Uterus (tissue), 4 donors: ENCODE measurements at regions of chr4 and their contacts with region 1.

Region 1: DNA sequence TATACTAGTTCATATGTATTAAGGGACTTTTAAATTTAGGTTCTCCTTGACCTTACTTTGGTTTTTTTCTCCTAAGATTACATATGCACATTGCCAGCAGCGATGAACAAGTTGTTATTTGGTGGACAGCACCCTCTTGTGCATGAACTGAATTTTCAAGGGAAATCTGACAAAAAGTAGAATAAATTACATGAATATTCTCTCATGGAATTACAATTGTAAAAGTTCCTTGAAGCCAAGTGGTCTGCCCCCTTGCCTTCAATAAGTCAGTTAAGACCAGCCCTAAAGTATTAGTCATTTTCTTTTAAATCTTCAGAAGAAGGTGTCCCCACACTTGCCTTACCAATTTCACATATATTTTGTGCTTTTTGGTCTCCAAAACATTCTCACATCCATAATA is 30.7 kb upstream of the SMARCA5 start:
- DNase-seq: peak in 1 of 2 donors; percentile 30
- H3K4me3 ChIP-seq: no peak overlapping the region
- H3K27ac ChIP-seq: no peak overlapping the region
- H3K4me1 ChIP-seq: no peaks in the 10 kb centered on the region
- H3K27me3 ChIP-seq: no peaks in the 10 kb centered on the region
- CTCF ChIP-seq: peak; percentile 72 to 78 (median 74)
- POLR2A ChIP-seq: no peak

Region 2: DNA sequence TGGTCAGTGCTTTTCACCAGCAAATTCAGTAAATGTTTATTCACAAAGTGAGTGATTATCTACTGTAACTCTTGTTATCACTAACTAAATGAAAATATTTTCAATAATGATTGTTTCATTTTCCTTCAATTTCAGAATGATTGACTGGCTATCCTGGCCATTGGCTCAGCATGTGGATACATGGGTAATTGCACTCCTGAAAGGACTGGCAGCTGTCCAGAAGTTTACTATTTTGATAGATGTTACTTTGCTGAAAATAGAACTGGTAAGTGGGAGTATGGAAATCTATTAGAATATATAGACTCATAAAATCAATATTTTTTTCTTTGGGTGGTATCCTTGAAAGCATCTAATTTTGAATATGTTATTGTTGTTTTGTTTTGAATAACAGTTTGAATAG is 287.3 kb before region 1 on chr4:
- intact Hi-C with region 1: loop called (anchors 10 kb)
- DNase-seq: no peak
- H3K4me3 ChIP-seq: no peak overlapping the region
- H3K27ac ChIP-seq: no peak overlapping the region
- H3K4me1 ChIP-seq: no peaks in the 10 kb centered on the region
- H3K27me3 ChIP-seq: no peaks in the 10 kb centered on the region
- CTCF ChIP-seq: no peak
- POLR2A ChIP-seq: no peak

Region 3: DNA sequence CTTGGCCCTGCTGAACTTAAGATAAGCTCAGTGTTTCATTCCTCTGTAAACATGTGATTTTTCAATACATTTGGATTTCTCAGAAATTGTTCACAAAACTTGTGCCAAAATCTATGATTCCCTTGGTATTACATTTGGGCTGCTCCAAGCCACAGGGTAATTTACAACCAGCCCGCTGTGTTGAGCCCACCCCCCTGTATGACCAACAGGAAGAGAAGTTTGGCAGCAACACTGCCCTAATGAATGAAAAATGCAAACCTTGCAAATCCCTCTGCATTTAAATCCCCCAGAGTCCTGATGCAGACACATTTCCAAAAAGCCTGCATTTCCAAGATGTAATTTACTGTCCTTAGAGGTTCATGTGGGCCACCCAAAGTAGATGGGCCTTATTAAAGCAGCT is 180.3 kb before region 1 on chr4:
- intact Hi-C with region 1: no loop called
- DNase-seq: no peak
- H3K4me3 ChIP-seq: no peak overlapping the region
- H3K27ac ChIP-seq: no peak overlapping the region
- H3K4me1 ChIP-seq: no peaks in the 10 kb centered on the region
- H3K27me3 ChIP-seq: no peaks in the 10 kb centered on the region
- CTCF ChIP-seq: no peak
- POLR2A ChIP-seq: no peak